ENCODE measurements at regions of chr17 and their contacts with region 1.

Region 1: GRCh38 chr17:68205251-68205807 is 42.5 kb upstream of the AMZ2 start:
- DNase-seq: peak; percentile 82
- ATAC-seq: peak; percentile 90
- H3K4me3 ChIP-seq: peak overlapping the region; percentile 99
- H3K27ac ChIP-seq: peak overlapping the region; percentile 91
- H3K4me1 ChIP-seq: no peaks in the 10 kb centered on the region
- H3K27me3 ChIP-seq: peaks cover 8% of the 10 kb centered on the region
- CTCF ChIP-seq: peak; percentile 88
- POLR2A ChIP-seq: no peak
- RAD21 ChIP-seq: peak; percentile 46

Region 2: DNA sequence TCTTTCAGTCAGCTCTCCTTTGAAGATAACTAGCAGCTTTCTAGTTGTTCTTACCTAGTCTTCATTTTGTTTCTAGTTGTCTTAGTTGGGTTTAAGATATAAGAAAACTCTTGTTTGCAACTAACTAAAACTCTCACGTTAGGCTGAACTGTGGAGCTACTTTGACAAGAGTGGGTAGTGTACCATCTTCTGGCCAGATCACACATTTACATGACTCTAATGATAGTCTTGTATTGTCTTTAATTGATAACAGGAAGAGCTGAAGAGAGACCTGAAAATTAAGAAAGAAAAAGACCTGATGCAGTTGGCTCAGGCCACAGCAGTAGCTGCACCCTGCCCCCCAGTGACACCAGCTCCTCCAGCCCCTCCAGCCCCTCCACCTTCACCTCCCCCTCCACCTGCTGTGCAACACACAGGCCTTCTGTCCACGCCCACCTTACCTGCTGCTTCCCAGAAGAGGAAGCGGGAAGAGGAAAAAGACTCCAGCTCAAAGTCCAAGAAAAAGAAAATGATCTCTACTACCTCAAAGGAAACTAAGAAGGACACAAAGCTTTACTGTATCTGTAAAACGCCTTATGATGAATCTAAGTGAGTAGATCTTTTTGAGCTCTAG is 245.9 kb before region 1 on chr17:
- CTCF ChIA-PET with region 1: no interaction called
- POLR2A ChIA-PET with region 1: no interaction called
- dilution Hi-C with region 1: no loop called
- in situ Hi-C with region 1: no loop called
- intact Hi-C with region 1: loop called (anchors 5 kb)
- DNase-seq: no peak
- ATAC-seq: no peak
- H3K4me3 ChIP-seq: no peak overlapping the region
- H3K27ac ChIP-seq: peak overlapping the region; percentile 17; the same call in 1 of the 2 replicates
- H3K4me1 ChIP-seq: peaks cover 2% of the 10 kb centered on the region; the same call in 1 of the 2 replicates
- H3K27me3 ChIP-seq: no peaks in the 10 kb centered on the region
- CTCF ChIP-seq: no peak
- POLR2A ChIP-seq: no peak
- RAD21 ChIP-seq: no peak

Region 3: GRCh38 chr17:67993596-67994361 is 211.6 kb before region 1 on chr17:
- CTCF ChIA-PET with region 1: no interaction called
- POLR2A ChIA-PET with region 1: no interaction called
- dilution Hi-C with region 1: no loop called
- in situ Hi-C with region 1: no loop called
- intact Hi-C with region 1: loop called (anchors 10 kb)
- DNase-seq: peak; percentile 84
- ATAC-seq: peak; percentile 84
- H3K4me3 ChIP-seq: peak overlapping the region; percentile 72
- H3K27ac ChIP-seq: peak overlapping the region; percentile 92
- H3K4me1 ChIP-seq: peaks cover 5% of the 10 kb centered on the region; the same call in 1 of the 2 replicates
- H3K27me3 ChIP-seq: no peaks in the 10 kb centered on the region
- CTCF ChIP-seq: no peak
- POLR2A ChIP-seq: no peak; the same call in 1 of the 2 replicates
- RAD21 ChIP-seq: no peak

Region 4: GRCh38 chr17:68057531-68057952 is 147.8 kb before region 1 on chr17:
- CTCF ChIA-PET with region 1: interaction called, 4 read pairs
- POLR2A ChIA-PET with region 1: no interaction called
- dilution Hi-C with region 1: no loop called
- in situ Hi-C with region 1: no loop called
- intact Hi-C with region 1: loop called (anchors 5 kb)
- DNase-seq: peak; percentile 56
- ATAC-seq: peak; percentile 47
- H3K4me3 ChIP-seq: no peak overlapping the region
- H3K27ac ChIP-seq: no peak overlapping the region
- H3K4me1 ChIP-seq: peaks cover 18% of the 10 kb centered on the region
- H3K27me3 ChIP-seq: no peaks in the 10 kb centered on the region
- CTCF ChIP-seq: peak; percentile 57
- POLR2A ChIP-seq: no peak
- RAD21 ChIP-seq: peak; percentile 54

Region 5: DNA sequence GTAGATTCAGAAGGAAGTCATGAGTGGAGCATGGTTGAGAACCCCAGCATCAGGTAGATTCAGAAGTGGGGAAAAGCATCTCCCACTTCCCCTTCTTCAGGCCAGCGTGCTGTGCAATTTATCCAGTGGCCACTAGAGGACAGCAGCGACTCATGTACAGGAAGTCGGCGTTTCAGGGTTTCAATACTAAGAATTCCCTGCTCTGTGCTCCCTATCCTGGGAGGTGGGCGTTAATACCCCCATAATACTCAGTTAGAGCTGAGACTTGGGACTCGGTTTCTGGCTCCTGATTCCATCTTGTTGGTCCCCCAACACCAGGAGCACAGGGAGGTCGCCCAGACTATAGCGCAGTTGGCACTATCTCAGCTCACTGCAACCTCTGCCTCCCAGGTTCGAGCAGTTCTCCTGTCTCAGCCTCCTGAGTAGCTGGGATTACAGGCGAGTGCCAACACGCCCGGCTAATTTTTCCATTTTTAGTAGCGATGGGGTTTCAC is 32.8 kb before region 1 on chr17:
- CTCF ChIA-PET with region 1: no interaction called
- POLR2A ChIA-PET with region 1: no interaction called
- dilution Hi-C with region 1: no loop called
- in situ Hi-C with region 1: no loop called
- intact Hi-C with region 1: loop called (anchors 1 kb)
- DNase-seq: peak; percentile 49
- ATAC-seq: peak; percentile 96
- H3K4me3 ChIP-seq: no peak overlapping the region
- H3K27ac ChIP-seq: no peak overlapping the region
- H3K4me1 ChIP-seq: peaks cover 3% of the 10 kb centered on the region; the same call in 1 of the 2 replicates
- H3K27me3 ChIP-seq: peaks cover 3% of the 10 kb centered on the region; the same call in 1 of the 2 replicates
- CTCF ChIP-seq: peak; percentile 88
- POLR2A ChIP-seq: no peak
- RAD21 ChIP-seq: peak; percentile 87

Region 6: GRCh38 chr17:68327823-68328570 is 122.7 kb after region 1 on chr17:
- CTCF ChIA-PET with region 1: no interaction called
- POLR2A ChIA-PET with region 1: no interaction called
- dilution Hi-C with region 1: no loop called
- in situ Hi-C with region 1: no loop called
- intact Hi-C with region 1: no loop called
- DNase-seq: no peak
- ATAC-seq: no peak
- H3K4me3 ChIP-seq: no peak overlapping the region
- H3K27ac ChIP-seq: no peak overlapping the region
- H3K4me1 ChIP-seq: no peaks in the 10 kb centered on the region
- H3K27me3 ChIP-seq: 0 out of 2 replicates have a peak, but pooled peaks cover 2% of the 10 kb centered on the region
- CTCF ChIP-seq: 0 out of 2 replicates have a peak, but pooled peaks have one; percentile 10
- POLR2A ChIP-seq: no peak
- RAD21 ChIP-seq: no peak

Region 7: GRCh38 chr17:68435876-68436842 is 230.8 kb after region 1 on chr17:
- CTCF ChIA-PET with region 1: no interaction called
- POLR2A ChIA-PET with region 1: no interaction called
- dilution Hi-C with region 1: no loop called
- in situ Hi-C with region 1: no loop called
- intact Hi-C with region 1: loop called (anchors 5 kb)
- DNase-seq: peak; percentile 81
- ATAC-seq: peak; percentile 78
- H3K4me3 ChIP-seq: no peak overlapping the region
- H3K27ac ChIP-seq: no peak overlapping the region
- H3K4me1 ChIP-seq: peaks cover 9% of the 10 kb centered on the region
- H3K27me3 ChIP-seq: no peaks in the 10 kb centered on the region
- CTCF ChIP-seq: peak; percentile 91
- POLR2A ChIP-seq: 0 out of 2 replicates have a peak, but pooled peaks have one; percentile 32
- RAD21 ChIP-seq: peak; percentile 85

Region 8: GRCh38 chr17:68457539-68458259 is 252.4 kb after region 1 on chr17:
- CTCF ChIA-PET with region 1: no interaction called
- POLR2A ChIA-PET with region 1: no interaction called
- dilution Hi-C with region 1: no loop called
- in situ Hi-C with region 1: no loop called
- intact Hi-C with region 1: loop called (anchors 5 kb)
- DNase-seq: peak; percentile 98
- ATAC-seq: peak; percentile 93
- H3K4me3 ChIP-seq: peak overlapping the region; percentile 65
- H3K27ac ChIP-seq: no peak overlapping the region
- H3K4me1 ChIP-seq: peaks cover 2% of the 10 kb centered on the region; the same call in 1 of the 2 replicates
- H3K27me3 ChIP-seq: peaks cover 2% of the 10 kb centered on the region; the same call in 1 of the 2 replicates
- CTCF ChIP-seq: no peak
- POLR2A ChIP-seq: no peak
- RAD21 ChIP-seq: no peak